ENCODE measurements at regions of chr10 and their contacts with region 1.

Region 1: DNA sequence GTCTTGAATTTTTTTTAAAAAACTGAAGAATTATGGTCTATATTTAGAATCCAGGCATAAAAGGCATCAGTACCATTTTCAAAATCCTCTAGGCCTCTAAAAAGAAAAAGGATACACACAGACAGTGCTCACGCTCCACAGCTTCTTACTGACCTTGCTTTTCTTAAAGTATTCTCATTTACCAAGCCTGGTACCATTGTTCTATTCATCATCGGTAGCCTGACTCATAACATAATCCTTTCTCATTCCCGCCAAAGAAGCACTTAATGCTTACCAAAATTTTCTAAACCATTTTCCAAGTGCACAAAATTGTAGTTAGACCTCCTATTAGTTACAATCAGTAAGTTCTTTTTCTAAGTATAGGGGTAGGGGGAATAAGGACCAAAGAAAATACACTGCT is 54.6 kb downstream of the ATE1 start:
- DNase-seq: no peak
- H3K4me3 ChIP-seq: no peak overlapping the region
- H3K27ac ChIP-seq: no peak overlapping the region
- H3K4me1 ChIP-seq: no peaks in the 10 kb centered on the region
- H3K27me3 ChIP-seq: no peaks in the 10 kb centered on the region
- CTCF ChIP-seq: no peak
- POLR2A ChIP-seq: no peak

Region 2: DNA sequence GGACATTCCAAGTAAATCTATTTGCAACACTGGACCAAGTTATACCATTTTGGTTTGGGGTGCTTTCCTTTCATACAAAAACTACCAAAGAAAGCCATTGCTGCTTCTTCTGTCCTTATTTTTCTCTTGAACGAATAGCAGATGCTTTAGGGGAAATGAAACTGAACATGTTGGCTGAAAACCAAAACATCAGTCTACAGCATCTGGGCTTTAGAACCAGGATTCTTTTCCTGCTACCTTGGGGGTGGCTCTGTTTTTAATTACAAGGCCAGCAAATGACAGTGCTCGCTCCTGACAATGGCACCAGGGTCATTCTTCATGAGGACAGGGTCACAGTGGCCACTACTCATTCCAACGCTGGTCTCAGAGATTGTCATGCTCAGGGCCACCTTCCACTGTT is 941.8 kb before region 1 on chr10:
- intact Hi-C with region 1: loop called (anchors 10 kb)
- DNase-seq: no peak
- H3K4me3 ChIP-seq: no peak overlapping the region
- H3K27ac ChIP-seq: no peak overlapping the region
- H3K4me1 ChIP-seq: no peaks in the 10 kb centered on the region
- H3K27me3 ChIP-seq: no peaks in the 10 kb centered on the region
- CTCF ChIP-seq: no peak
- POLR2A ChIP-seq: no peak

Region 3: DNA sequence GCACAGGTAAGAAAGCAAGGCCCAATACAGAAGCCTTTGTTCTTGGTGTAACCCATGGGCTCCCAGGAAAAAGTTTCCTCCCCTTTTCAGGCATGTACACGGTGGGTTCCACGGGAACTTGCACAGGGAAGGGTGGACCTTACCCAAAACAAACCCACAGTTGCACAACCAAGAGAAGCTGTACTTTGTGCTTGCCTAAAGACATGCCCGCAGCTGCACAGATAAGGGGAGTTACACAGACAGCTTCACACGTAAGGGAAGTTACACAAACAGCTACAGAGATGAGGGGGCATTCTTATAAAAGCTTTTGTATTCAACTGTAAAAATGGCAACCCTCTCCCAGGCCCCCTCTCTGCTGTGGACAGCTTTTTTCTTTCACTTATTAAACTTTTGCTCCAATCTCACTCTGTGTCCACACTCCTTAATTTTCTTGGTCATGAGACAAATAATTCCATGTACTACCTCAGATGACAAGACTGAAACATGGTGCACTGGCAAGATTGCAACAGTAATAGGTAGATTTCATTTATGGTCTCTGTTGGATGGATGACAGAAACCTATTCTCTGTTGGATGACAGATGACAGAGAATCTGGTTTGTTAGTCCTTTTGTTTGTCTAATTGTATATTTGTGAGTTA is 18.3 kb before region 1 on chr10:
- intact Hi-C with region 1: no loop called
- DNase-seq: no peak
- H3K4me3 ChIP-seq: no peak overlapping the region
- H3K27ac ChIP-seq: no peak overlapping the region
- H3K4me1 ChIP-seq: no peaks in the 10 kb centered on the region
- H3K27me3 ChIP-seq: no peaks in the 10 kb centered on the region
- CTCF ChIP-seq: no peak
- POLR2A ChIP-seq: no peak